Activated naive CD4-positive, alpha-beta T cell treated with anti-CD3 and anti-CD28 coated beads for 36 hours (primary cell): ENCODE measurements at regions of chrX and their contacts with region 1.

Region 1: DNA sequence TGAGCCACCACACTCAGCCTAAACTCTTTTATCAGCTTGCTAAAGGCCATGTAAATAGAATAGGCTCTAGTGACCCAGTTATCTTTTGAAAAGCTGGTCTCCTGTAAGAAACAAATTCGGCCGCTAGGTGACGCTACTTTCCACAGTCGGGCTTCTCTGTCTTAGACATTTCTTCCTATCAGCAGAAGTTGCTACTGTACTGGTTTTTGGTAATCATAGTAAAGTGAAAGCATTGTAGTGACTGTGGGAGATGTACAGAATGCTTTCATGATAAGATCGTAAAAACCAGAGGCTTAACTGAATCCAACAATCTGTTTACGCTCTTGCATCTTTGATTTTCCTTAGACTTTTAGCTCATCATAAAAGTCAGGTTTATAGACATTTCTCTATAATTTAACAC is 82.6 kb downstream of the GK start:
- DNase-seq: peak; percentile 90
- H3K4me3 Mint-ChIP-seq: no peak overlapping the region
- H3K27ac Mint-ChIP-seq: no peak overlapping the region
- H3K4me1 Mint-ChIP-seq: peaks cover 11% of the 10 kb centered on the region
- H3K27me3 Mint-ChIP-seq: no peaks in the 10 kb centered on the region

Region 2: DNA sequence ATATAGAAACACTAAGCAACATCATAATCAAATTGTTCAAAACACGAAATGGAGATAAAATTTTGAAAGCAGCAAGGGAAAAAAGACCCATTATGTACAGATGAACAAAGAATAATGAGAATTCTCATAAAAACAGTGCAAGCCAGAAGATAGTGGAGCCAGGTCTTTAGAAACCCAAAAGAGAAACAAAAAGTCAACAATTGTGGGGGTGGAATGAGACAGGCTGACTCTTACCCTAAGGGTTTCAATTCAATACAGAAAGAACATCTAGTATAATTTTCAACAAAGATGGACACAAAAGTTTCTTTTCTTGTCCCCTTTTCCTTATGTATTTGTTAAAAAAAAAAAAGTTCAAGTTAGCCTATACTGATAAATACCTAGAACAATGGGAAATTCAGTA is 554.5 kb before region 1 on chrX:
- CTCF ChIA-PET with region 1: no interaction called
- intact Hi-C with region 1: no loop called
- DNase-seq: no peak
- H3K4me3 Mint-ChIP-seq: no peak overlapping the region
- H3K27ac Mint-ChIP-seq: no peak overlapping the region
- H3K4me1 Mint-ChIP-seq: no peaks in the 10 kb centered on the region
- H3K27me3 Mint-ChIP-seq: peaks cover 7% of the 10 kb centered on the region

Region 3: DNA sequence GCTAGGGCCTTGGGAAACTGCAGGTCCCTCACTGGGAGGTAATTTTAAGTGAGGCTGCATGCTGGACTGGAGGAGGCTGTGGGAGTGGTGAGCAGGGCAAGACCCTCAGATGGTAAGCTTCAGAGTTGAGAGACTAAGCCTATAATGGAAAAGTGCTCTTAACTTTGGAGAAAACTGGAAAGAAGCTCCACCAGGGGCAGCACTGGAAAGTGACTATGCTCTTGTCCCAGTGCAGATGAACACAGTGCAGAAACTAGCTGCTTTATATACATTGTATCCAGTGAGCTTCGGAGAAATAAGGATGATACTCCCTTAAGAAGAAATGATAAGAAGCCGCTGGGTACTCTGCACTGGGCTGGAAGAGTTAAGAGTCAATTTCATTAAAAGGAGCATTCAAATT is 523.7 kb before region 1 on chrX:
- CTCF ChIA-PET with region 1: no interaction called
- intact Hi-C with region 1: no loop called
- DNase-seq: no peak
- H3K4me3 Mint-ChIP-seq: no peak overlapping the region
- H3K27ac Mint-ChIP-seq: no peak overlapping the region
- H3K4me1 Mint-ChIP-seq: no peaks in the 10 kb centered on the region
- H3K27me3 Mint-ChIP-seq: no peaks in the 10 kb centered on the region

Region 4: GRCh38 chrX:30635630-30636029 is 100.2 kb before region 1 on chrX:
- CTCF ChIA-PET with region 1: interaction called, 12 read pairs
- intact Hi-C with region 1: no loop called
- DNase-seq: peak; percentile 19
- H3K4me3 Mint-ChIP-seq: no peak overlapping the region
- H3K27ac Mint-ChIP-seq: no peak overlapping the region
- H3K4me1 Mint-ChIP-seq: peaks cover 2% of the 10 kb centered on the region
- H3K27me3 Mint-ChIP-seq: no peaks in the 10 kb centered on the region

Region 5: GRCh38 chrX:30821116-30821515 is 85.3 kb after region 1 on chrX:
- CTCF ChIA-PET with region 1: interaction called, 7 read pairs
- intact Hi-C with region 1: loop called (anchors 1 kb)
- DNase-seq: no peak
- H3K4me3 Mint-ChIP-seq: no peak overlapping the region
- H3K27ac Mint-ChIP-seq: no peak overlapping the region
- H3K4me1 Mint-ChIP-seq: peaks cover 17% of the 10 kb centered on the region
- H3K27me3 Mint-ChIP-seq: no peaks in the 10 kb centered on the region

Region 6: DNA sequence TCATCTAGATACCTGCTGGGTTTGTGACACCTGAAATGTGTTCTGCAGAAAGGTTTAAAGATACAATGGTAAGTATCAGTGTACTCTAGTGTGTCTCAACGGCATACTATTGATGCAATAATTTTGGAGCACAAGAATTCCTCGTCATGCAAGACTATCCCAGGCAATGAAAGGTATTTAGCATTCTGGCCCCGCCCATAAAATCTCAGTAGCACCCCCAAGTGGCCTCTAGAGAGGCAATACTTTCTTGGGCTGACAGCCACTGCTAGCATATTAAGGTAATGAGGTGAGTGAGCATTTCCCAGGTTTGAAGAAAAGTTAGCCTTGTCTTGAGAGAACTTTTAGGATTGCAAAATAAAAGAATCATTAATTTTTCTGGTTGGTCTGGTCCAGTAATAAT is 129.2 kb after region 1 on chrX:
- CTCF ChIA-PET with region 1: interaction called, 9 read pairs
- intact Hi-C with region 1: loop called (anchors 2 kb)
- DNase-seq: peak; percentile 30
- H3K4me3 Mint-ChIP-seq: no peak overlapping the region
- H3K27ac Mint-ChIP-seq: no peak overlapping the region
- H3K4me1 Mint-ChIP-seq: no peaks in the 10 kb centered on the region
- H3K27me3 Mint-ChIP-seq: no peaks in the 10 kb centered on the region

Region 7: DNA sequence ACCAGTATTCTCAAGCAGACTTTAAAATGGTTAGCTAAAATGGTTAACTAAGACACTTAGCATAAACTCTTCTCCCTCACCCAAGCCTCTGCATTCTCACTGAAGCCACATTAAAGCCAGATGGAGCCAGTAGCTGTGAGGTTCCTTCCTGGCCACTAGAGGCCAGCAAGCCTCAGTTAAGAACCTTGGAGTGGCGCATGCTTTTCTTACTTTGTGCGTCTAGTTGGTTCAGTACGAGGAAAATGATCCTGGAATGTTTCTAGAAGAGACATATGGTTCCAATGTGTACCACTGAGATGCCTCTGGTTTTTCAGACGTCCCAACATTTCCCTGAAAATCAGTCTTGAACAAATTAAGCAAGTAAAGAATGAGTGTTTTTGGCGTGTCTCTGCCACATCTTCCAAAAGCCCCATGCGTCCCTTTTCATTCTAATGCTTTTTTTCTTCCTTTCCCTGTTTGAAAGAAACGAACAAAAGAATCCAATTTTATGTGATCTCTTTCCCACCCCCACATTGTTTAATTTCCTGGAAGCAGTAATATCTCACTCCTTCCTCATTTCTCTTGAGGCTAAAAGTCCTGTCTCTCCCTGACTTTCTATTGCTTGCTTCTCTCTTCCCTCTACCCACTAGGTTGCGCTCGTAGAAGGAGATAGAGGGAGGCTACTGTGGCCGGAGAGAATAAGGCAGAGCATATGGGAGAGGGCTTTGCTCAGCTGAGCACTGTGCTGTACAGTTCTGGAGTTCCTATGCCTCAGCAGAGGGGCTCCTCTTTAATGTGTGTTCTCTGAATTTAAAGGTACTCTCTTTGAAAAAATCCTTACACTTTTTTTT is 236.2 kb after region 1 on chrX:
- CTCF ChIA-PET with region 1: no interaction called
- intact Hi-C with region 1: loop called (anchors 5 kb)
- DNase-seq: peak; percentile 23
- H3K4me3 Mint-ChIP-seq: peak overlapping the region; percentile 56
- H3K27ac Mint-ChIP-seq: no peak overlapping the region
- H3K4me1 Mint-ChIP-seq: peaks cover 12% of the 10 kb centered on the region
- H3K27me3 Mint-ChIP-seq: no peaks in the 10 kb centered on the region

Region 8: GRCh38 chrX:31423609-31424189 is 687.9 kb after region 1 on chrX:
- CTCF ChIA-PET with region 1: no interaction called
- intact Hi-C with region 1: loop called (anchors 10 kb)
- DNase-seq: peak; percentile 23
- H3K4me3 Mint-ChIP-seq: no peak overlapping the region
- H3K27ac Mint-ChIP-seq: no peak overlapping the region
- H3K4me1 Mint-ChIP-seq: no peaks in the 10 kb centered on the region
- H3K27me3 Mint-ChIP-seq: no peaks in the 10 kb centered on the region